ENCODE measurements at regions of chr5 and their contacts with region 1.

Region 1: GRCh38 chr5:111278845-111279504 is 54.8 kb downstream of the CAMK4 start:
- H3K4me3 ChIP-seq: no peak overlapping the region
- H3K27ac ChIP-seq: no peak overlapping the region
- H3K4me1 ChIP-seq: no peaks in the 10 kb centered on the region
- CTCF ChIP-seq: peak; percentile 50

Region 2: DNA sequence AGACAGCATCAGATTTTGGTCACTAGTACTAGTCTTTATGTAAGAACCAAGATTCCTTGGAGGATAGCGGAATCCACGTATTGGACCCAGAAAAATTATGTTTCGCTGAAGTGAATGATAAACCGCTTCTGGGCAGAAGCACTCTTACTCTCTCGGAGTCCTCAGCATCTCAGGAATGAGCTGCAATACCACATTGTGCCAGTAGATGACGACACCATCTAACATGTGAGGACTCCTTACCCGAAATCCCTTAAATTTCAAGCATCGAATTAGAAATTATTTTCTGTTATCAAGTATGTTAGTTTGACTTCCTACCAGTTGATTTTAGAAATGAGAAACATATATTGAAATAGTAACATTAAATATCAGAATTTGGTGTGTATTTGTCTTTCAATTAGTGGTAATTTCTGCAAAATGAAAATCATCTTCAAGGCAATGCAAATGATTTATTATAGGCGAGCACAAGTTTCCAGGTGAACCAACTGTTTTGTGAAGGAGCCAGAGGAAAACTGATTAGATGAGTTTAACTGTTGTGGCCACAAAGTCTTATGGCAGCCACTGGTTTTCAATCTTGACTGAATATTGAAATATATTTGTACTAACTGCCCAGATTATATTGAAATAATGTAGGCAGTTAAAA is 120.8 kb before region 1 on chr5:
- CTCF ChIA-PET with region 1: interaction called, 49 read pairs
- POLR2A ChIA-PET with region 1: no interaction called
- H3K4me3 ChIP-seq: no peak overlapping the region
- H3K27ac ChIP-seq: no peak overlapping the region
- H3K4me1 ChIP-seq: no peaks in the 10 kb centered on the region
- CTCF ChIP-seq: peak; percentile 80

Region 3: DNA sequence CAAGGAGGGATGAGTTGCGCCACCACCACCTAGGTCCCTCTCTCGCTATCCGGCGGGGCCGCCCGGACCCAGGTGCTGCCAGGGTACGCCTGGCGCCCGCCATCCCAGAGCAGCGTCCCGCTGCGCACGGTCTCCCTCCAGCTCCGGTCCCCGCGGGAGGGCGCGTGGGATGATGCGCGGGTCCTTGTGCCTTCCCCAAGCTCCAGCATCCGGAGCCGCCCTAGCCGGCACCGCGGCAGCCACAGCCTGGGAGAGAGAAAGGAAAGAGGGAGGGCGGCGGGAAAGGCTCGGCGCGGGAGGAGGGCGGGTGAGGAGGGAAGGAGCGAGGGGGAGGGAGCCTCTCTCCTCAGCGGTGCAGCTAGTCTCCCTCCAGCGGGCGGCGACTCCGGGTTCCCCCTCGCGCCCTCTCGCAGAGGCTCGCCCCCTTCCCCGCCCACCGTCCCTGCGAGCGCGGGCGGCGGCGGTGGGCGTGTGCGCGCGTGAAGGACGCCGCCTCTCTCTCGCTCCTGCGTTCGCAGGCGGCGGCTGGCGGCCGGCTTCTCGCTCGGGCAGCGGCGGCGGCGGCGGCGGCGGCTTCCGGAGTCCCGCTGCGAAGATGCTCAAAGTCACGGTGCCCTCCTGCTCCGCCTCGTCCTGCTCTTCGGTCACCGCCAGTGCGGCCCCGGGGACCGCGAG is 54.9 kb before region 1 on chr5 and contains the start of gene CAMK4:
- CTCF ChIA-PET with region 1: interaction called, 10 read pairs
- POLR2A ChIA-PET with region 1: no interaction called
- H3K4me3 ChIP-seq: peak within 1 kb of the TSS; percentile 59
- H3K27ac ChIP-seq: peak within 1 kb of the TSS; percentile 66; the same call in 1 of the 2 replicates
- H3K4me1 ChIP-seq: peaks cover 10% of the 10 kb centered on the region
- CTCF ChIP-seq: peak; percentile 66; the same call in 1 of the 2 replicates

Region 4: GRCh38 chr5:111478266-111478665 is 199.3 kb after region 1 on chr5:
- CTCF ChIA-PET with region 1: interaction called, 10 read pairs
- POLR2A ChIA-PET with region 1: no interaction called
- H3K4me3 ChIP-seq: no peak overlapping the region
- H3K27ac ChIP-seq: no peak overlapping the region
- H3K4me1 ChIP-seq: no peaks in the 10 kb centered on the region
- CTCF ChIP-seq: no peak